GM12878 (cell line): ENCODE measurements at regions of chr2 and their contacts with region 1.

Region 1: GRCh38 chr2:165874445-165875039 is 79.0 kb downstream of the TTC21B start:
- DNase-seq: peak; percentile 36
- ATAC-seq: peak; percentile 86
- H3K4me3 ChIP-seq: no peak overlapping the region
- H3K27ac ChIP-seq: peak overlapping the region; percentile 12; the same call in 1 of the 2 replicates
- H3K4me1 ChIP-seq: peaks cover 7% of the 10 kb centered on the region; the same call in 1 of the 2 replicates
- H3K27me3 ChIP-seq: no peaks in the 10 kb centered on the region
- CTCF ChIP-seq: peak; percentile 60 to 81 (median 66)
- EP300 ChIP-seq: no peak
- POLR2A ChIP-seq: no peak
- RAD21 ChIP-seq: peak; percentile 91

Region 2: DNA sequence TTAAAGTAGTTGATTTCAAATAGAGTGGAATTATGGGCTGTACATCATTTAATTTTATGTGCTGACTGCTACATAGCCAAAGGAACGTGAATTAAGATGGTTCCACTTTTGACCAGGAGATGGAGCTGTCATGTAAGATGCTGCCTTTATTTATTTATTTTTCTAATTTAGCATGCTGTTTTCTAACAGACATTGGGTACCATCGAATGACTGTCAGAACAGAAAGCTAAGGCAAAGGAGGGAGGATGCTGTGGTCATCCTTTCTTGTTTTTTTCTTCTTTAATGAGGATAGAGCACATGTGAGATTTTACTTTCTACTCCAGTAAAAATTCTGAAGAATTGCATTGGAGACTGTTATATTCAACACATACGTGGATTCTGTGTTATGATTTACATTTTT is 635.3 kb before region 1 on chr2 and contains the start of gene SCN2A:
- CTCF ChIA-PET with region 1: interaction called, 26 read pairs
- POLR2A ChIA-PET with region 1: no interaction called
- RAD21 ChIA-PET with region 1: interaction called, 15 read pairs
- SMC1A ChIA-PET with region 1: interaction called, 9 read pairs
- in situ Hi-C with region 1: no loop called
- intact Hi-C with region 1: loop called (anchors 2 kb)
- DNase-seq: no peak
- ATAC-seq: peak; percentile 60; the same call in 2 of the 3 replicates
- H3K4me3 ChIP-seq: no peak within 1 kb of the TSS
- H3K27ac ChIP-seq: no peak within 1 kb of the TSS
- H3K4me1 ChIP-seq: no peaks in the 10 kb centered on the region
- H3K27me3 ChIP-seq: no peaks in the 10 kb centered on the region
- CTCF ChIP-seq: peak; percentile 42 to 54 (median 45); a peak in 4 of 6 replicates
- EP300 ChIP-seq: no peak
- POLR2A ChIP-seq: no peak
- RAD21 ChIP-seq: peak; percentile 53; the same call in 1 of the 2 replicates
- polyA plus RNA-seq, gene SCN2A: not detected

Region 3: GRCh38 chr2:165450156-165450555 is 424.4 kb before region 1 on chr2:
- CTCF ChIA-PET with region 1: interaction called, 27 read pairs
- POLR2A ChIA-PET with region 1: interaction called, 3 read pairs
- RAD21 ChIA-PET with region 1: interaction called, 31 read pairs
- SMC1A ChIA-PET with region 1: interaction called, 25 read pairs
- in situ Hi-C with region 1: no loop called
- intact Hi-C with region 1: no loop called
- DNase-seq: no peak
- ATAC-seq: peak; percentile 59
- H3K4me3 ChIP-seq: no peak overlapping the region
- H3K27ac ChIP-seq: no peak overlapping the region
- H3K4me1 ChIP-seq: no peaks in the 10 kb centered on the region
- H3K27me3 ChIP-seq: no peaks in the 10 kb centered on the region
- CTCF ChIP-seq: no peak; a peak in 1 of 6 replicates
- EP300 ChIP-seq: no peak
- POLR2A ChIP-seq: no peak
- RAD21 ChIP-seq: no peak

Region 4: DNA sequence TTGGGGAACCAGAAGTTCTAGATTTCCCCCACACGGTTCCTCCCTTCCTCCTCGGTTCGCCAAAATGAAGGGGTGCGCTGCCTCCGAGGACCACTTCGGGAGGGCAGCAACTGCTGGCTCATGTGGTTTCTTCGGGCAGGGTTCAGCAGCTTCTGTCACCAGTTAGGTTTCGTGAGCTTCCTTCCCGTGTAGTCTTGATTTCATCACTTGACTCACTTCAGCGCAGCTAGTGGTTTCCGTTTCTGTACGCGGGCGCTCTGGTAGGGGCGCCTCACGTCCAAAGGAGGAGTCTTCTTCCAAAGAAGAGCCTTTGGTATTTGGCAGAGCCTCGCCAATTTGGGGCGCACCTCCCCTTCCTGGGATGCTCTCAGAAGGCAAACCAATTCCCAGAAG is 80.0 kb before region 1 on chr2:
- CTCF ChIA-PET with region 1: interaction called, 4 read pairs
- POLR2A ChIA-PET with region 1: interaction called, 3 read pairs
- RAD21 ChIA-PET with region 1: interaction called, 6 read pairs
- SMC1A ChIA-PET with region 1: interaction called, 3 read pairs
- in situ Hi-C with region 1: no loop called
- intact Hi-C with region 1: loop called (anchors 5 kb)
- DNase-seq: peak; percentile 43
- ATAC-seq: peak; percentile 95
- H3K4me3 ChIP-seq: peak overlapping the region; percentile 71
- H3K27ac ChIP-seq: no peak overlapping the region
- H3K4me1 ChIP-seq: peaks cover 6% of the 10 kb centered on the region
- H3K27me3 ChIP-seq: peaks cover 0 to 13% of the 10 kb centered on the region in 2 experiments; a peak in 3 of 4 replicates
- CTCF ChIP-seq: no peak
- EP300 ChIP-seq: 0 out of 4 replicates have a peak, but pooled peaks have one; percentile 22 to 35
- POLR2A ChIP-seq: peak; percentile 57; the same call in 1 of the 2 replicates
- RAD21 ChIP-seq: no peak

Region 5: DNA sequence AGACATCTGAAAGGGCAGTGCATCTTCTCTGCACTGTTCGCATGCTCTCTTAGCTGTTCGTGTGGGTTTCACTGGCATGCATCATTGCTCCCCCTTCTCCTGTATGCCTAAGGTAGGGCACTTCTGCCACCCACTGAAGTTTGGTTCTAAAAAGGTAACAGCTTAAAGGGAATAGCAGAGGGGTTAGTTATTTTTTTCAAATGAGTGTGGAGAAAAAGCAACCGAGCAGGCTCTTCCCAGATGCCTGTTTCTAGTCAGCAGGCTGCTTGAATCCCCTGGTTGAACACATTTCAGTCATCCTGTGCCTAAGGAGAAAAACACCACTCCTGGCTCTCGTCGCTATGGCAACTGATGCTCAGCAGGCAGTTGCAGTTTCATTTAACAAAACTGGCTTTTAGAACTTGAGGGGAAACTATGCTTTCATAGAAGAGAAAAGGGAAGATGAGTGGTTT is 10.7 kb before region 1 on chr2:
- CTCF ChIA-PET with region 1: interaction called, 10 read pairs
- POLR2A ChIA-PET with region 1: no interaction called
- RAD21 ChIA-PET with region 1: no interaction called
- SMC1A ChIA-PET with region 1: interaction called, 5 read pairs
- in situ Hi-C with region 1: no loop called
- intact Hi-C with region 1: no loop called
- DNase-seq: no peak
- ATAC-seq: peak; percentile 75
- H3K4me3 ChIP-seq: no peak overlapping the region
- H3K27ac ChIP-seq: no peak overlapping the region
- H3K4me1 ChIP-seq: peaks cover 4% of the 10 kb centered on the region; the same call in 1 of the 2 replicates
- H3K27me3 ChIP-seq: no peaks in the 10 kb centered on the region
- CTCF ChIP-seq: no peak
- EP300 ChIP-seq: no peak
- POLR2A ChIP-seq: no peak
- RAD21 ChIP-seq: no peak

Region 6: DNA sequence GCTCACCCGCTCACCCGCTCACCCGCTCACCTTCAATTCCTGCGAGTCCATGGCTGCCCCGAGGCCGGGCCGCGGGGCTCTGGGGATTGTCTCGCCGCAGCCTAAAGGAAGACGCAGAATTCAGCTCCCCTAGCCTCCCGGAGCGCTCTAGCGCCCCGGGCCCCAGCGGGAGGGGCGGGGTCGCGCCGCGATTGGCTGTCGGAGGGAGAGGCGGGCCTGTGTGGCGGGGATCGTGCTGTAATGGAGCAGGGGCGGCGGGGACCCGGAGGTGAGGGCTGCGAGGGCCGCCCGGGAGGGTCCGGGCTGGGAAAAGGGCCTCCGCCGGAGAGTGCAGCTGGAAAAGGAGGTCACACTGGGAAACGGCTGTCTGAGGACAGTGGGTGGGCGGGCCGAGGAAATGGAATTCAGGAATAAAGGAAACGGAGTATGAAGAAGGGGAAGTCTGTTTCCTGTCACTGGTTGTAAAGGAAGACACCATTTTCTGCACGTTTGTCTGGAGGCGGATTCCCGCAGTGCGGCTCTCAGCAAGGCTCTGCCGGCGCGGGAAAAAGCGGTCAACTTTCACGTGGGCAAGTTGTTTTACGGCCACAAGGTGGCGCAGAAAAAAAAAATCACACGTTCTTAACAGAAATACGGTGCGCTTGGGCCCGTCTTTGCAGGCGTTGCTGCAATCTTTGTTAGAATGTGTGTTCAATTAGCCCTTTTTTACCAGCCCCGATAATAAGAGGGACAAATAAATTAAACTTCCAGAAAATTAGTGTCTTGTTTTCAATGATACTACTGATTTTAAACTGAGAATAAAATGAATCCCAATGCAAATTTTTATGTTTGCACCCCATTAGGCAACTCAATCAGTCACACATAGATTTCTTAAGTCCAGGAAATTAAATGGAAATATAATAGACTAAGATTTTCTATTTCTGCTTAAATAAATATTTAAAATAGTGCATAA is 79.4 kb after region 1 on chr2 and contains the start of gene TTC21B:
- CTCF ChIA-PET with region 1: interaction called, 17 read pairs
- POLR2A ChIA-PET with region 1: no interaction called
- RAD21 ChIA-PET with region 1: interaction called, 8 read pairs
- SMC1A ChIA-PET with region 1: interaction called, 6 read pairs
- in situ Hi-C with region 1: no loop called
- intact Hi-C with region 1: loop called (anchors 5 kb)
- DNase-seq: peak; percentile 64
- ATAC-seq: peak; percentile 97
- H3K4me3 ChIP-seq: peak within 1 kb of the TSS; percentile 81
- H3K27ac ChIP-seq: peak within 1 kb of the TSS; percentile 78
- H3K4me1 ChIP-seq: no peaks in the 10 kb centered on the region; the same call in 1 of the 2 replicates
- H3K27me3 ChIP-seq: no peaks in the 10 kb centered on the region
- CTCF ChIP-seq: peak; percentile 63 to 82 (median 76)
- EP300 ChIP-seq: 0 out of 4 replicates have a peak, but pooled peaks of 1 of the 2 experiments have one; percentile 17
- POLR2A ChIP-seq: peak; percentile 84
- RAD21 ChIP-seq: peak; percentile 47
- polyA plus RNA-seq, gene TTC21B: 2.7 to 3.5 TPM